ENCODE measurements at regions of chrX and their contacts with region 1.

Region 1: DNA sequence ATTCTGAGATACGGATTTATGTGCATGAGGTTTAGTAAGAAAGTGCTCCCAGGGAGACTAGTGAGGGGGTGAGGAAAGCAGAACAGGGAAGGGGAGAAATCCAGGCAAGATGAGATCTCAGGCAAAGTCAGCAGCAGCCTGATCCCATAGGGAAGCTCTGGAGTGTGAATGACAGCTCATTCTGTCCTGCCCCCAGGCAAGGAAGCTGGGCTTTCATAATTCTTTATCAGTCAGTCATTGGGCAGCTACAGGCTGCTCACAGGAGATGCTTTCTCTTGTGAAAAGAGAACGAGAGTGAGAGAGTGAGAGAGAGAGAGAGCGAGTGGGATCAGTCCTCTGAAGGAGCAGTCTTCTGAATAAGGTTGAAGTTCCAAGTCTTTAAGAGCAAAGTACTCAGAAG is 48.1 kb downstream of the SRPX start:
- DNase-seq: no peak
- ATAC-seq: no peak
- H3K4me3 ChIP-seq: no peak overlapping the region
- H3K27ac ChIP-seq: no peak overlapping the region
- H3K4me1 ChIP-seq: no peaks in the 10 kb centered on the region
- H3K27me3 ChIP-seq: no peaks in the 10 kb centered on the region
- CTCF ChIP-seq: no peak
- POLR2A ChIP-seq: no peak

Region 2: DNA sequence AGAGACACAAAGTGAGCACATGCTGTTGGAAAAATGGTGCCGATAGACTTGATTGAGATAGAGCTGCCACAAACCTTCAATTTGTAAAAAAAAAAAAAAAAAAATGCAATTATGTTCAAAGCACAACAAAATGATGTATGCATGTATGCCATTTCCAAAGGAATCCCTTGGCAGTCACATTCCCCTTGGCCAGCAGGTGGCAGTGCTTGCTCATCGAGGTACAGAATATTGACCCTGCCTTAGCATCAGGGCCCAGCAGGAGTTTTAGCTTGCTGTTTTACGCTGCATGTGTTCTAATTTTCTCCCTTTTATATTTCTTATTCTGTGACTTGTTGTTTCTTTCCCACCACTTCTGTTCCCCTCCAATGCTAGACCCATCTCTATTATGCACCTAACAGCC is 427.2 kb before region 1 on chrX:
- intact Hi-C with region 1: loop called (anchors 5 kb)
- DNase-seq: peak; percentile 65 to 82 (median 70)
- ATAC-seq: peak; percentile 52
- H3K4me3 ChIP-seq: no peak overlapping the region
- H3K27ac ChIP-seq: no peak overlapping the region
- H3K4me1 ChIP-seq: no peaks in the 10 kb centered on the region
- H3K27me3 ChIP-seq: no peaks in the 10 kb centered on the region
- CTCF ChIP-seq: peak; percentile 47 to 85 (median 70)
- POLR2A ChIP-seq: no peak

Region 3: GRCh38 chrX:37993837-37994619 is 178.6 kb before region 1 on chrX:
- intact Hi-C with region 1: no loop called
- DNase-seq: peak; percentile 72 to 90 (median 84)
- ATAC-seq: peak; percentile 83
- H3K4me3 ChIP-seq: no peak overlapping the region
- H3K27ac ChIP-seq: peak overlapping the region in 3 of 4 donors; percentile 60 to 68 (median 65)
- H3K4me1 ChIP-seq: peaks cover 18% of the 10 kb centered on the region
- H3K27me3 ChIP-seq: no peaks in the 10 kb centered on the region
- CTCF ChIP-seq: peak in 3 of 7 experiments; percentile 7 to 25 (median 15)
- POLR2A ChIP-seq: no peak